ENCODE measurements at regions of chr11 and their contacts with region 1.

Region 1: DNA sequence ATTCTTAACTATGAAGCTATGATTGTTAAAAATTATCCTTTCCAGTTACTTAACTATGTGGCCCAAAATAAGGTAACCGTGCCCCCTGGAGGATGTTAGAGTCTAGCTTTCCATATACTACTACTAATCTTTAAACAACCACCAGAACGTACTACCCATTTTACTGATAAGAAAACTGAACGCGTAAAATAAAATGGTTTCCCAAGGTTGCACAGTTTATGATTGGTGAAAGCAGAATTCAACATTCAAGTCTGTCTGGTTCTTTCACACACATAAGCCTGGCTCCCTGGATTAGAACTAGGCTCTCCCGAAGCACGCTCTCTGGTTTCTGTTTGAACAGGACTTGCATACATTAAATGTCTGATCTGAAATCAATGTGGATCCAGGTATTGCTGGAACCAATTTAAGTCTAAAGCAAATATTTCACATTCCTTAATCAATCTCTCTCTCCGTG is 437.9 kb upstream of the CCDC90B start:
- DNase-seq: peak; percentile 81 to 83
- H3K4me3 ChIP-seq: peak overlapping the region; percentile 28
- H3K4me3 Mint-ChIP-seq: peak overlapping the region; percentile 84
- H3K27ac Mint-ChIP-seq: peak overlapping the region; percentile 96
- H3K4me1 ChIP-seq: peaks cover 48% of the 10 kb centered on the region
- H3K4me1 Mint-ChIP-seq: peaks cover 39% of the 10 kb centered on the region
- H3K27me3 ChIP-seq: no peaks in the 10 kb centered on the region
- H3K27me3 Mint-ChIP-seq: no peaks in the 10 kb centered on the region
- CTCF ChIP-seq: peak; percentile 75 to 78

Region 2: GRCh38 chr11:82900277-82901164 is 823.5 kb before region 1 on chr11 and contains the start of gene PRCP:
- CTCF ChIA-PET with region 1: no interaction called
- POLR2A ChIA-PET with region 1: no interaction called
- intact Hi-C with region 1: loop called (anchors 2 kb)
- DNase-seq: peak; percentile 99
- H3K4me3 ChIP-seq: peak within 1 kb of the TSS; percentile 63
- H3K4me3 Mint-ChIP-seq: peak within 1 kb of the TSS; percentile 93
- H3K27ac Mint-ChIP-seq: peak within 1 kb of the TSS; percentile 95
- H3K4me1 ChIP-seq: peaks cover 4% of the 10 kb centered on the region; the same call in 1 of the 2 replicates
- H3K4me1 Mint-ChIP-seq: peaks cover 40% of the 10 kb centered on the region
- H3K27me3 ChIP-seq: no peaks in the 10 kb centered on the region
- H3K27me3 Mint-ChIP-seq: no peaks in the 10 kb centered on the region
- CTCF ChIP-seq: no peak
- total RNA-seq, gene PRCP: 107 TPM in 2 replicates

Region 3: DNA sequence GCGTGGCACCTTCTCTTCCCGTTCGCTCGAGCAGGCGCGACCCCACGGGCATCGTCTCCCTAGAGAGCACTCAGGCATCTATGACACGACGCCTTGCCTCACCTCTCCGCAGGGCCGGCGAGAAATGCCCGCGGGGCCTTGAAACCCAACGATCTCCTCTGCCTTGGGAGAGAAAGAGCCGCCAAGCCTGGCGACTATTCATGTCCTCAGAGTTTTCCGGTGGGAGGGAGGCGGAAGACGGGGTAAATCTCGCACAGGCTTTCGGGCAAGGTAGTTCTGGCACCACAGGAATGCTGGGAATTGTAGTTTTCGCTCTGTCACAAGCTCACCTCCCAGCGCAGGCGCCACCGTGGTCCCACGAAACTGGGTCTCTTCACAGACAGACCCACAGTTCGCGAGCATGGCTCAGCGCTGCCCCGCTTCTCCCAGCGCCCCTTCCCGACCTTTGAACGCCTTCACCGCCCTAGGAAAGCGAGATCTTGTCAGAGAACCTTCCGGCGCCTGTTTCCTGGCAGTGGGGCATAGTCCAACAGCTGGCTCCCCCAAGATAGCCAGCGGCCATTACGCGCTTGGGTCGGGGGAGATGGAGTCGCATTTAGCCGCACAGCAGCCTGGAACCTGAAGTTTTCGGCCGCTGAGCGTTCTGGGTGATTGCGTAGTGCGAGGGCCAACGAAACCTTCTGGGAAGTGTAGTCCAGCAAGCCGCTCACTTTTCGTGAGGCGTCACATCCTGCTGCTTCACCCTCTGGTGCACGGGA is 438.1 kb before region 1 on chr11 and contains the start of gene CCDC90B:
- CTCF ChIA-PET with region 1: interaction called, 82 read pairs
- POLR2A ChIA-PET with region 1: interaction called, 6 read pairs
- intact Hi-C with region 1: loop called (anchors 1 kb)
- DNase-seq: peak; percentile 98 to 99
- H3K4me3 ChIP-seq: peak within 1 kb of the TSS; percentile 93
- H3K4me3 Mint-ChIP-seq: peak within 1 kb of the TSS; percentile 73
- H3K27ac Mint-ChIP-seq: peak within 1 kb of the TSS; percentile 97
- H3K4me1 ChIP-seq: peaks cover 14% of the 10 kb centered on the region
- H3K4me1 Mint-ChIP-seq: peaks cover 7% of the 10 kb centered on the region
- H3K27me3 ChIP-seq: no peaks in the 10 kb centered on the region
- H3K27me3 Mint-ChIP-seq: no peaks in the 10 kb centered on the region
- CTCF ChIP-seq: peak in 1 of 2 experiments; percentile 66
- total RNA-seq, gene CCDC90B: 46.2 and 63.6 TPM in 2 replicates

Region 4: DNA sequence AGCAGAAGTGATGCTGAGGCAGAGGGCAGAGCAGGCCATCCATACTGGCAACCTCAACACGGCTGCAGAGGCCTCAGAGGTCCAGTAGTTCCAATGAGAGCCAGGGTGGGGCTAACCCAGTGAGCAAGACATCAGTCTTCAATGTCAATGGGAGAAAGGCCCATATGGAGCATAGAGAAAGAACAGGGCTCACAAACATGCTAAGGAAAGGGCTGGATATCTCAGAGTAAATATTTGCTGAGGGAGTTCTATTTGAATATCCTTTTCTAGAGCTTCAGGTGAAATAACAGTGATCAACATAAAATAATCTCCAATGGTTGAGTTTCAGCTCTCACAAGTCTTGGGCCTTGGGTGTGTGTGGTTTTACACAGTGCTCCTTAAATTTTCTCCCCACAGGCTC is 387.0 kb before region 1 on chr11:
- CTCF ChIA-PET with region 1: interaction called, 10 read pairs
- POLR2A ChIA-PET with region 1: no interaction called
- intact Hi-C with region 1: no loop called
- DNase-seq: no peak
- H3K4me3 ChIP-seq: no peak overlapping the region
- H3K4me3 Mint-ChIP-seq: no peak overlapping the region
- H3K27ac Mint-ChIP-seq: no peak overlapping the region
- H3K4me1 ChIP-seq: no peaks in the 10 kb centered on the region
- H3K4me1 Mint-ChIP-seq: peaks cover 5% of the 10 kb centered on the region
- H3K27me3 ChIP-seq: no peaks in the 10 kb centered on the region
- H3K27me3 Mint-ChIP-seq: peaks cover 9% of the 10 kb centered on the region
- CTCF ChIP-seq: no peak

Region 5: DNA sequence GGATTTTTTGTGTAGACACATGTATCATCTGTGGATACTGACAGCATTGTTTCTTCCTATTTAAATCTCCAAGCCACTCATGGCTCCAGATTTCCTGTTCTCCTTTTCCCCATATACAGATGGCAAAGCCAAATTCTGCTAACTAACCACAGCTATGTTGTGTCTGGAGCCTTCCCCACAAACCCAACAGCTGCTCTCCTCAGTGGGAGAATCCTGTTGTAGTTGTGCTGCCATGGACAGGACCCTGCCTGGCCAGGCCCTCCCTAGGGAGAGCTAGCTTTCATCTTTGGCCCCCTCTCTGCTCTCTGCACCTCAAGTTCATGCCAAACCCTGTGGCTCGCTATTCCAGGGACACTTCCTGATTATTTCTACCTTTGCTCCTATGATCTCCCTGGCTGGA is 331.5 kb before region 1 on chr11:
- CTCF ChIA-PET with region 1: no interaction called
- POLR2A ChIA-PET with region 1: no interaction called
- intact Hi-C with region 1: no loop called
- DNase-seq: no peak
- H3K4me3 ChIP-seq: no peak overlapping the region
- H3K4me3 Mint-ChIP-seq: no peak overlapping the region
- H3K27ac Mint-ChIP-seq: no peak overlapping the region
- H3K4me1 ChIP-seq: no peaks in the 10 kb centered on the region
- H3K4me1 Mint-ChIP-seq: no peaks in the 10 kb centered on the region
- H3K27me3 ChIP-seq: no peaks in the 10 kb centered on the region
- H3K27me3 Mint-ChIP-seq: peaks cover 2% of the 10 kb centered on the region
- CTCF ChIP-seq: no peak

Region 6: DNA sequence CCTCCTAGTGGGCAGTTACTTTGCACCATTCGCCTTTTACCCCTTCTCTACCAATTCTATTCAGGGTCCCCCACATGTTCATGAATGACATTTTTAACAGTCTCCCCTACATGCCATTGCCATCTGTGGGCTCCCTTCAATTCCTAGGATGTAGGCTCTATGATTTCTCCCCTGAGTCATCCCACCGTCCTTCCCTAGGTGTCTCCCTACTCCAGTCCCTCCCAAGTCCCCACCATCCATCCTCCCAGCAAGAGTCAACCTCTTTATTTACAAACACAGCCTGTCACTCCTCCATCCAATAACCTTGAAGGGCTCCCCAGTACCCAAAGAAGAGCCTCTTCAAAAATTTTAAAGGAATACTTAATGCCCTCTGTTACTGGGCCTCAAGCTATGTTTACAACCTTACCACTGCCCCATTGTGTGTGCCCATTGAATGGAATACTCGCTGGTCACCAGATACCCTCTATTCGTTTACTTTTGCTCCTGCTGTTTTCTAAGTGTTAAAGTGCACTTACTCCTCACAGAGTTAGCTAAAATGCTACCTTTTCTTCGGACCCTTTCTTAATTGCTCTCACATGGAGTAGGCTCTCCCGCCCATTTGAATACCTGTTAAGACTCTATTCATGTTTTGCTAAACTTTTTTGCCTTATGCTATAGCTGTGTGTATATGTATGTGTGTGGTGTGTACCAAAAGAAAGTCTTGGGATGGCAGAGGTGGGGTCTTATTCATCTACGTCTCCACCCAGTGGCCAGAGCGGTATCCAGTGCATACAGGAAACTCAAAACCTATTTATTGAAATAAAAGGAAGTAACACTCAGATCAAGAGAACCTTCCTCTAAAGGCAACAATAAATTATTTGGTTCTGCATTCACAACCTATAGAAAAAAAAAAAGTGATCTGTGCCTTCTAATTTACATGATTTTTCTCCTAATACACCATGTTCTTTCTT is 202.1 kb before region 1 on chr11:
- CTCF ChIA-PET with region 1: interaction called, 13 read pairs
- POLR2A ChIA-PET with region 1: no interaction called
- intact Hi-C with region 1: loop called (anchors 1 kb)
- DNase-seq: peak; percentile 52 to 58
- H3K4me3 ChIP-seq: no peak overlapping the region
- H3K4me3 Mint-ChIP-seq: no peak overlapping the region
- H3K27ac Mint-ChIP-seq: no peak overlapping the region
- H3K4me1 ChIP-seq: no peaks in the 10 kb centered on the region
- H3K4me1 Mint-ChIP-seq: no peaks in the 10 kb centered on the region
- H3K27me3 ChIP-seq: no peaks in the 10 kb centered on the region
- H3K27me3 Mint-ChIP-seq: no peaks in the 10 kb centered on the region
- CTCF ChIP-seq: peak; percentile 58 to 59

Region 7: GRCh38 chr11:83648610-83649527 is 75.2 kb before region 1 on chr11:
- CTCF ChIA-PET with region 1: interaction called, 14 read pairs
- POLR2A ChIA-PET with region 1: no interaction called
- intact Hi-C with region 1: loop called (anchors 2 kb)
- DNase-seq: peak in 1 of 2 experiments; percentile 65
- H3K4me3 ChIP-seq: no peak overlapping the region
- H3K4me3 Mint-ChIP-seq: peak overlapping the region; percentile 20
- H3K27ac Mint-ChIP-seq: peak overlapping the region; percentile 65
- H3K4me1 ChIP-seq: peaks cover 31% of the 10 kb centered on the region
- H3K4me1 Mint-ChIP-seq: peaks cover 18% of the 10 kb centered on the region
- H3K27me3 ChIP-seq: no peaks in the 10 kb centered on the region
- H3K27me3 Mint-ChIP-seq: no peaks in the 10 kb centered on the region
- CTCF ChIP-seq: no peak

Region 8: GRCh38 chr11:83713701-83714100 is 10.3 kb before region 1 on chr11:
- CTCF ChIA-PET with region 1: interaction called, 34 read pairs
- POLR2A ChIA-PET with region 1: interaction called, 9 read pairs
- intact Hi-C with region 1: loop called (anchors 1 kb)
- DNase-seq: no peak
- H3K4me3 ChIP-seq: no peak overlapping the region
- H3K4me3 Mint-ChIP-seq: no peak overlapping the region
- H3K27ac Mint-ChIP-seq: peak overlapping the region; percentile 69
- H3K4me1 ChIP-seq: peaks cover 62% of the 10 kb centered on the region
- H3K4me1 Mint-ChIP-seq: peaks cover 64% of the 10 kb centered on the region
- H3K27me3 ChIP-seq: no peaks in the 10 kb centered on the region
- H3K27me3 Mint-ChIP-seq: no peaks in the 10 kb centered on the region
- CTCF ChIP-seq: no peak

Region 9: DNA sequence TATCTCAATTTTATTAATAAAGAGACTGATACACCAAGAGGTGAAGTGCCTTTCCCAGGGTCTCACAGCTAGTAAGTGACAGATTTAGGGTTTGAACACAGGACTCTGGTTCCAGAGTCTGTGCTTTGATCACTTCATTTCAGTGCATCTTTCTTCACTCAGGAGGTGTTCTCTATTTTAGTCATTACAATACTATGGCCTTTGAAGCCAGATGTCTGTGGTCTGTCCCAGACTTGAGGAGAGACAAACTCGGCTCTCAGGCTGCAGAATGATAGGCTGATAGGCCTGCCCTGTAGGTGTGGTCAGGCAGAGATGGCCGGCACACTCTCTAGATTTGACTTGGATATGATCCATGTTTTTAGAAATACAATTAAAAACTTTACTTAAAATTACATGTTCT is 40.6 kb after region 1 on chr11:
- CTCF ChIA-PET with region 1: no interaction called
- POLR2A ChIA-PET with region 1: no interaction called
- intact Hi-C with region 1: no loop called
- DNase-seq: no peak
- H3K4me3 ChIP-seq: no peak overlapping the region
- H3K4me3 Mint-ChIP-seq: no peak overlapping the region
- H3K27ac Mint-ChIP-seq: no peak overlapping the region
- H3K4me1 ChIP-seq: no peaks in the 10 kb centered on the region
- H3K4me1 Mint-ChIP-seq: no peaks in the 10 kb centered on the region
- H3K27me3 ChIP-seq: no peaks in the 10 kb centered on the region
- H3K27me3 Mint-ChIP-seq: peaks cover 14% of the 10 kb centered on the region
- CTCF ChIP-seq: no peak

Region 10: GRCh38 chr11:84003181-84003580 is 279.1 kb after region 1 on chr11:
- CTCF ChIA-PET with region 1: no interaction called
- POLR2A ChIA-PET with region 1: no interaction called
- intact Hi-C with region 1: no loop called
- DNase-seq: no peak
- H3K4me3 ChIP-seq: no peak overlapping the region
- H3K4me3 Mint-ChIP-seq: no peak overlapping the region
- H3K27ac Mint-ChIP-seq: no peak overlapping the region
- H3K4me1 ChIP-seq: no peaks in the 10 kb centered on the region
- H3K4me1 Mint-ChIP-seq: no peaks in the 10 kb centered on the region
- H3K27me3 ChIP-seq: no peaks in the 10 kb centered on the region
- H3K27me3 Mint-ChIP-seq: no peaks in the 10 kb centered on the region
- CTCF ChIP-seq: no peak